Natural killer cell (primary cell): ENCODE measurements at regions of chr17 and their contacts with region 1.

Region 1: DNA sequence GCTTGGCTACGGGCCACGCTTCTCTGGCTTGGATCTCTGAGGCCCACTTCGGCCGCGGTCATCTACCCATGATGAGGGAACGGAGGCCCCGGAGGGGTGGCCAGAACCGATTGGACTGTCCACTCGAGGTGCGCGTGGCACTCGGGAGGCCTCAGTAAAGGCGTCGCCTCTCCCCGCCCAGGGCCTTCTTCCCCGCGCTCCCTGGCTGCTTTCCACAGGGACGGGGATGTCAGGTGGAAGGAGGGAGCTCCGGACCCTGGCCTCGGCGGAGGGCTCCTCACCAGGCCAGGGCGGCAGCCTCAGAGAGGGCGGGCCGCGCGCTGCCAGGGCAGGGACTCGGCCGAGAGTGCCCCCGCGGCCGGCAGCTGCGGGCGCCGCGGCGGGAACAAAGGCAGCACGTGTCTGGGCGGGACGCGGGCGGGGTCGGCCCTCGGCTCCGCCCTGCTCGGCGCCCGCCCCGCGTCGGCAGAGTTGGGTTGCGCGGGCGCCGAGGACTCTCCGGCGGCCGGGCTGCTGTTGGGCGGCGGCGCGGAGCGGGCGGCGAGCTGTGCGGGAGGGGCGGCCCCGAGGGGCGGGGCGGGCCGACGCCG is 587 bp upstream of the CDK5R1 start:
- DNase-seq: peak; percentile 73 to 90
- ATAC-seq: peak; percentile 77 to 90 (median 82)
- H3K4me3 ChIP-seq: peak overlapping the region; percentile 19
- H3K4me3 Mint-ChIP-seq: peak overlapping the region; percentile 92
- H3K27ac ChIP-seq: peak overlapping the region; percentile 45
- H3K27ac Mint-ChIP-seq: peak overlapping the region; percentile 82 to 84
- H3K4me1 ChIP-seq: peaks cover 44% of the 10 kb centered on the region
- H3K4me1 Mint-ChIP-seq: peaks cover 50 to 51% of the 10 kb centered on the region in 2 donors
- H3K27me3 ChIP-seq: no peaks in the 10 kb centered on the region
- H3K27me3 Mint-ChIP-seq: no peaks in the 10 kb centered on the region
- CTCF ChIP-seq: no peak

Region 2: GRCh38 chr17:32253117-32253611 is 233.0 kb before region 1 on chr17:
- intact Hi-C with region 1: no loop called
- DNase-seq: peak; percentile 60 to 77
- ATAC-seq: peak; percentile 85 to 100 (median 98)
- H3K4me3 ChIP-seq: no peak overlapping the region
- H3K4me3 Mint-ChIP-seq: no peak overlapping the region
- H3K27ac ChIP-seq: no peak overlapping the region
- H3K27ac Mint-ChIP-seq: no peak overlapping the region
- H3K4me1 ChIP-seq: no peaks in the 10 kb centered on the region
- H3K4me1 Mint-ChIP-seq: no peaks in the 10 kb centered on the region
- H3K27me3 ChIP-seq: no peaks in the 10 kb centered on the region
- H3K27me3 Mint-ChIP-seq: peaks cover 0 to 3% of the 10 kb centered on the region in 2 donors
- CTCF ChIP-seq: peak; percentile 84

Region 3: DNA sequence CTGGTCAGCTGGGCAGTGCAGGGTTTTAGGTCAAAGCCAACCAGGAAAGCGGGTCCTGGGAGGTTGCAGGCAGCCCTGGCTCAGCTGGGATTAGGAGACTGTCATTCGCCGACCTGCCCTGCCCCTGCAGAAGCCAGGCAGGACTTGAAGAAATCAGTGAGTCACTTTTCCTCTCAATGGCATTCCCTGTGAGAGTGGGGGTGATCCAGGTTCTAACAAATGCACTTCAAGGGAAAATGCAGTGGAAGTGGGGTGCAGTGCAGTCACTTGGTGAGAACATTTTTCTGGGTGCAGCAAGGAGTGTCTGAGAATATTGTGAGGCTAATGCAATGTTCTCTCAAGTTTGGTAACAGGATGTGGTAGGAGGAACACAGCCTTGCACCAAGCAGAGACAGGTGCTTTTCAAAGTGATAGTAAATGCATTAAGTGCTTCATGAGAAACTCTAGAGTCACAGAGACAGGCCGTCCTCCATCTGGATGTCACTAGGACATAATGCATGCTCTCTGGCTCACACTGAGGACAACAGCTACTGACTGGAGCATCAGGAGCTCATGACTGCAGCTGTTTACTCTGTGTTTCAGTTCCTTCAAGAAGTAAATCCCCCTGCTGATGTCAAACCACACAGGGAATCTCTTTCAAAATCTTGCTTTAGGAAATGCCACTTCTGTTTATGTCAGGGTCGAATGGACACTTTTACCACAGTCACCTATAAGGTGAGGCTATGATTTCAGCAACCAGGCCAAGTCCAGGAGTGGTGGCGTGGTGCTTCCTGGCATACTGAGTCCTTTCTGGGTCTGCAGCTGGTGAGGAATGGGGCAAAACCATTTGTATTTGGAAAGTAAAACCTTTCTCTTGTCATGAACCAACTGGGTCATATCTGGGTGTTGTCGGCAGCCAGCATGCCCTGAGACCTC is 17.3 kb after region 1 on chr17:
- intact Hi-C with region 1: loop called (anchors 2 kb)
- DNase-seq: peak in 1 of 2 donors; percentile 83
- ATAC-seq: peak; percentile 77 to 91 (median 88)
- H3K4me3 ChIP-seq: no peak overlapping the region
- H3K4me3 Mint-ChIP-seq: peak overlapping the region; percentile 77
- H3K27ac ChIP-seq: peak overlapping the region; percentile 95
- H3K27ac Mint-ChIP-seq: peak overlapping the region; percentile 95 to 98
- H3K4me1 ChIP-seq: peaks cover 71% of the 10 kb centered on the region
- H3K4me1 Mint-ChIP-seq: peaks cover 58% of the 10 kb centered on the region in 2 donors
- H3K27me3 ChIP-seq: no peaks in the 10 kb centered on the region
- H3K27me3 Mint-ChIP-seq: no peaks in the 10 kb centered on the region
- CTCF ChIP-seq: no peak

Region 4: DNA sequence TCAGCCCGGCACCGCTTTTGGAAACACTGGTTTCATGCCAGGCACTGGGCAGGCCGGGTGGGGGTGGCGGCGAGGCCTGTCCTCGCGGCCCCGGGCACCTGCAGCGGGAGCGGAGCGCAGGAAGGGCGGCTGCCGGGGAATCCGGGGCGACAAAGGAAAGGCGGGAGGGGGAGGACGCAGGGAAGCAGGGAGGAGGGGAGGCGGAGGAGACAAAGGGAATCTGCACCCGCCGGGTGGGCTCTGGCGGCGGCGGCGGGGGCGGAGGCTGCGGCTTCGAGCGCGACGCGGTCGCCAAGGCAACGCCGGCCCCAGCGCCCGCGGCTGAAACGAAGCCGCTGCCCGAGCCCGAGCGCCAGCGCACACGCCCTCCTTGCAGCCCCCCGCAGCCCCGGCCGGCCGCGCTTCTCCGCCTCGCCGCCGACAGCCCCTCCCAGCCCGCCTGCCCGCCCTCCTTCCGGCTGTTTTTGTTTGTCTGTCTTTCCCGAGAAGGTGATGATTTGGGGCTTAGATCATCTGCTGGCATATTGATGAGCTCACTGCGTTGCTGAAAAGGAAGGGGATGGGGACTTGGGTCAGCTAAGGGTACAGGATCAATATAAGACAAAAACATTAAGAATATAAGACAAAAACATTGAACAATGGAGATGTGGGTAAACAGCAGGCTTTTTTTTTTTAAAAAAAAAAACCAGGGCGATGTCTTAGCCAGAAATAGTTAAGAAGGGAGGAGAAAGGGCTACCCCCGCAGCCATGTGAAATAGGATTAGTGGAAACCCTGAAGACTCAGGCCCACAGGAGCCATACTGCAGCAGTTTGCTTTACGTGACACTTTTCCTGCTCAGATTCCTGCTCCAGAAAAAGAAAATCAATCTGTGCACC is 33.3 kb after region 1 on chr17:
- intact Hi-C with region 1: loop called (anchors 2 kb)
- DNase-seq: peak; percentile 69 to 85
- ATAC-seq: peak; percentile 49 to 71 (median 64)
- H3K4me3 ChIP-seq: peak overlapping the region; percentile 24
- H3K4me3 Mint-ChIP-seq: peak overlapping the region; percentile 90
- H3K27ac ChIP-seq: peak overlapping the region; percentile 91
- H3K27ac Mint-ChIP-seq: peak overlapping the region; percentile 91 to 98
- H3K4me1 ChIP-seq: peaks cover 88% of the 10 kb centered on the region
- H3K4me1 Mint-ChIP-seq: peaks cover 80 to 82% of the 10 kb centered on the region in 2 donors
- H3K27me3 ChIP-seq: no peaks in the 10 kb centered on the region
- H3K27me3 Mint-ChIP-seq: no peaks in the 10 kb centered on the region
- CTCF ChIP-seq: no peak

Region 5: DNA sequence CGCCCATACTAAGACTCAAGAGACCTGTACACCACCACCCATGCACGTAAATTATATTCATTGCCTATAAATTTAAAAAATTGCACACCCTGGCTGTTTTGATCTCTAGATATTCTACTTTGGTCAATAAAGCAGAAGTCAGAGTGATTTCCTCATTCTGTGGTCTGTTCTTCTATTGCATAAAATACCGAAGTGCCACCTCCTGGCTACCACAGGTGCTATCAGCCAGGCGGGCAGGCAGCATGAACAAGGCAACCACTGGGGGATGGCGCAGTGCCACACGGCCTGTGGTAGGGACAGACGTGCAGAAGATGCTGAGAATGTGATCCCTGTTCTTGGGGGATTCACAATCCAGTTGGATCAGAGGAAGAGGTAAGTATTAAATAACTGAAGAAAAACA is 122.9 kb after region 1 on chr17:
- intact Hi-C with region 1: loop called (anchors 1 kb)
- DNase-seq: peak; percentile 58 to 86
- ATAC-seq: peak; percentile 96 to 100 (median 100)
- H3K4me3 ChIP-seq: no peak overlapping the region
- H3K4me3 Mint-ChIP-seq: no peak overlapping the region
- H3K27ac ChIP-seq: no peak overlapping the region
- H3K27ac Mint-ChIP-seq: peak overlapping the region in 1 of 2 donors; percentile 56
- H3K4me1 ChIP-seq: peaks cover 3% of the 10 kb centered on the region
- H3K4me1 Mint-ChIP-seq: peaks cover 9% of the 10 kb centered on the region in 2 donors
- H3K27me3 ChIP-seq: no peaks in the 10 kb centered on the region
- H3K27me3 Mint-ChIP-seq: peaks cover 0 to 3% of the 10 kb centered on the region in 2 donors
- CTCF ChIP-seq: peak; percentile 66

Region 6: GRCh38 chr17:32732900-32733299 is 246.7 kb after region 1 on chr17:
- intact Hi-C with region 1: no loop called
- DNase-seq: no peak
- ATAC-seq: no peak
- H3K4me3 ChIP-seq: no peak overlapping the region
- H3K4me3 Mint-ChIP-seq: no peak overlapping the region
- H3K27ac ChIP-seq: no peak overlapping the region
- H3K27ac Mint-ChIP-seq: no peak overlapping the region
- H3K4me1 ChIP-seq: no peaks in the 10 kb centered on the region
- H3K4me1 Mint-ChIP-seq: no peaks in the 10 kb centered on the region
- H3K27me3 ChIP-seq: no peaks in the 10 kb centered on the region
- H3K27me3 Mint-ChIP-seq: no peaks in the 10 kb centered on the region
- CTCF ChIP-seq: no peak

Region 7: DNA sequence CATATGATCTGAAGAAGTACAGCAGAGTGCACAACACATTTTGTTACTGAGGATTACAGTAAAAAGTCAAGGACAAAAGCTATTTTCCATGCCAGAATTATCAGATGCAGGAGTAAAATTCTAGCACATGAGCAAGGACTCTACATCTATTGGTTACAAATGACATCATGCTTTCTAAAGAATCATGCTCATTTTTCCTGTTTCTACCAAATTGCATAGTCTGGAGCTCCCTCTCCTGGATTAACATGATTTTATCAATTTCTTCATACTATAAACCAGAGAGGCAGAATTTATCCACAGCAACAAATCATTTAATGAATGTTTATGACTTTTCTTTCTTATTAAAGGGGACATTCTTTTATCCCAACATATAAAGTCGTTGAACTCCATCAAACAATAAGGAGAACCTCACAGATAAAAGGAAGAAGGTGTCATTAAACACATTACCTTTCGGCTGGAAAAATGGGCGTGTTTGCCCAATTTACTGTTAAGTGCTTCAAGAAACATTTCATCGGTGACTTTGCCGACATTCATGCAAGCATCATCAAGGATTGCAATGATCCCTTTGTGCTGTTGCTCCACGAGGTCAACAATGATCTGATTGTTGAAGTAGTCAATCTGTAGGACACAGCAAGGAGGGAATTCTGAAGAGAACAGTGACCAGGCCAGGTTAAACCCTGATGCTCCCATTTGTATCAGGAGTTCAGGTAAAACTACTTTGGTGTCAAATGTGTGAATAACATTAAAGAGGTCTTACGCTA is 269.0 kb after region 1 on chr17:
- intact Hi-C with region 1: loop called (anchors 5 kb)
- DNase-seq: peak in 1 of 2 donors; percentile 72
- ATAC-seq: peak; percentile 60 to 80 (median 76)
- H3K4me3 ChIP-seq: no peak overlapping the region
- H3K4me3 Mint-ChIP-seq: no peak overlapping the region
- H3K27ac ChIP-seq: no peak overlapping the region
- H3K27ac Mint-ChIP-seq: no peak overlapping the region
- H3K4me1 ChIP-seq: no peaks in the 10 kb centered on the region
- H3K4me1 Mint-ChIP-seq: peaks cover 0 to 5% of the 10 kb centered on the region in 2 donors
- H3K27me3 ChIP-seq: no peaks in the 10 kb centered on the region
- H3K27me3 Mint-ChIP-seq: no peaks in the 10 kb centered on the region
- CTCF ChIP-seq: peak; percentile 72